ENCODE measurements at regions of chr17 and their contacts with region 1.

Region 1: DNA sequence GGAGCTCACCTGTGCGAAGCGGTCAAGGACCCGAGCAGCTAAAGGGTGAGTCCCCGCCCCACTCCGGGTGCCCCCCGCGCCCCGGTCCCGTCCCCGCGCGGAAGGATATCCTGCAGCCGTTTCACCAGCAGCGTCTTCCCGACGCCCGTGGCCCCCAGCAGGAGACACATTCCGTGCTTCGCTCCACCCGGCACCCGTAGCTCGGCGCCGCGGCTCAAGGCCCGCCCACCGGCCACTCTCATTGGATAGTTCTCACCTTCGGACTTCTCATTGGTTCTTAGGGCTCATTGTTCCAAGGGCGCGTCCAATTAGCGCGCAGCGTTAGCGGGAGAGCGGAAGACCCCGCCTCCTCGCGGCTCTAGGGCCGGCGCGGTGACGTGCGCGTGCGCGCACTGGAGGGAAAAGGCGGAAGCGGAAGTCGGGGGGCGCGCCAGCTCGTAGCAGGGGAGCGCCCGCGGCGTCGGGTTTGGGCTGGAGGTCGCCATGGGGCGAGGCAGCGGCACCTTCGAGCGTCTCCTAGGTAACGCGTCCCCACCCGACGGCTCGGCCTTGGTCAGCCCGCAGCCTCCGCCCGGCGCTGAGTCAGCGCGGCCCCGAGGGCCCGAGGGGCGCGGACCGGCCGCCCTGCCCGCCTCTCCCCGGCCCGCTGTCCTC is at the starts of genes ARL16 and HGS:
- DNase-seq: peak; percentile 96 to 99
- ATAC-seq: peak; percentile 99 to 100
- H3K4me3 ChIP-seq: peak within 1 kb of the TSS; percentile 90 to 99 (median 97)
- H3K27ac ChIP-seq: peak within 1 kb of the TSS; percentile 82 to 97 (median 88)
- H3K4me1 ChIP-seq: peaks cover 23 to 27% of the 10 kb centered on the region in 2 donors
- H3K27me3 ChIP-seq: no peaks in the 10 kb centered on the region
- CTCF ChIP-seq: no peak
- POLR2A ChIP-seq: peak; percentile 69 to 90
- total RNA-seq, gene ARL16: 12.9 to 23.6 (median 20.0) TPM
- total RNA-seq, gene HGS: 62.1 to 150 (median 113) TPM

Region 2: DNA sequence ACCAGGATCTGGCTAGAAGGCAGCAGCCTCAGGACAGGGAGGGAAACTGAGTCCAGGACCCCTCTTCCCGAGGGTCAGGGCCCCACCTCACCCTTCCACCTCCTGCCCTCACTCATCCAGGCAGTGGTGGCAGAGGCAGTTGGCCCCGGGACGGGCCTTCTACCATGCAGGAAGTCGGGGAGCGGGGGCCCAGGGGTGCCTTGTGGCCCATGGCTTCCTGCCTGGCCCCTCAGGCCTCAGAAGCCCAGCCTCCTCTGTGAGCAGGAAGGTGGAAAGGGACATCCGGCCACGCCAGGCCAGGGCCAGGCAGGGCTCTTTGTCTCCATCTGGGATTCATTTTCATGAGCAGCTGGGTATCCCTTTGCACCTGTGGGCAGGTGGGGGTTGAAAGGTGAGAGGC is 230.0 kb before region 1 on chr17:
- in situ Hi-C with region 1: no loop called
- intact Hi-C with region 1: no loop called
- DNase-seq: no peak
- ATAC-seq: no peak
- H3K4me3 ChIP-seq: no peak overlapping the region
- H3K27ac ChIP-seq: no peak overlapping the region
- H3K4me1 ChIP-seq: no peaks in the 10 kb centered on the region
- H3K27me3 ChIP-seq: no peaks in the 10 kb centered on the region
- CTCF ChIP-seq: no peak
- POLR2A ChIP-seq: no peak

Region 3: GRCh38 chr17:81636505-81637288 is 47.0 kb before region 1 on chr17 and contains the starts of genes NPLOC4 and TSPAN10:
- in situ Hi-C with region 1: no loop called
- intact Hi-C with region 1: loop called (anchors 1 kb)
- DNase-seq: peak; percentile 73 to 80
- ATAC-seq: peak; percentile 77
- H3K4me3 ChIP-seq: peak within 1 kb of the TSS; percentile 72 to 97 (median 94)
- H3K27ac ChIP-seq: peak within 1 kb of the TSS; percentile 95 to 98 (median 98)
- H3K4me1 ChIP-seq: peaks cover 23 to 26% of the 10 kb centered on the region in 2 donors
- H3K27me3 ChIP-seq: no peaks in the 10 kb centered on the region
- CTCF ChIP-seq: peak in 2 of 5 experiments; percentile 22 to 25
- POLR2A ChIP-seq: peak; percentile 97 to 99
- total RNA-seq, gene NPLOC4: 176 to 290 (median 263) TPM
- total RNA-seq, gene TSPAN10: 0.22 to 0.26 TPM in 2 of 4 donors, not detected in the others

Measured in gastrocnemius medialis (tissue), 4 donors.